ENCODE measurements at regions of chr9 and their contacts with region 1.

Region 1: DNA sequence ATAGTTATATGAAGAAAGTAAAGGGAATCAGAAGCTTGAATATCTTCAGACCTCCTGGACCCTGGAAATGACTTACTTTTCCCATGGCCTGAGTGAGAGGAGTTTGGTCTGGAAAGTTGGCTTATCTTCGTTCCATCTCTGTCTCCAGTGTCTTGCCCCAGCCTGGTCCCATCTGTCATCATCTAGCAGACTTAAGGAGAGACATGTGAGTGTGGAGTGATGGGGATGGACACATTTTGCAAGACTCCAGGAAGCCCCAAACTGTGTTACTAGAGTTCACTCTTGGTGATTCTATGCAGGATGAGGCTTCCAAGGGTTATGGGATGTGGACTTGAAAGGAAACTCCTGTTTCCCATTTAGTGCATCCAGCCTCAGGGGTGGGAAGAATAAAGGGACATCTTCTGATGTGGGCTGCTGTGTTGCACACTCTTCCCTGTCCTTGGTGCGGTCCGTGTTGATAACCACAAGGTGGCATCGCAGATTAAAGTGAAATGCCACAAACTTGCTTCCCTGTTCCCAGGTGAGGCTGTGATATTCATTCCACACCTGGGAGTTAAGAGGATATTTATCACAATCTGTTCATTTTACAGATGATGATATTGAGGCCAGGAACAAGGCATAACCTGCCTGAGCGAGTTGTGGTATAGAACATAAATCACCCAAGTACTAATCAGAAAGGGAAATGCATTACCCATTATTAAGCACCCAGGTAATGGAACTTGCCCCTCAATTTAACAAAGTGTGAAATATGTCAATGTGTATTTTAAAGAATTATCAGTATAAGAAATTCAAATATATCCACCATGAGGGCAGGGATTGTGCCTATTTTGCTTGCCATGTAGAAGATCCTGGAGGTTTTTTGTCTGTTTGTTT is 269.9 kb upstream of the PAPPA start:
- DNase-seq: no peak
- H3K4me3 ChIP-seq: no peak overlapping the region
- CTCF ChIP-seq: peak; percentile 67

Region 2: DNA sequence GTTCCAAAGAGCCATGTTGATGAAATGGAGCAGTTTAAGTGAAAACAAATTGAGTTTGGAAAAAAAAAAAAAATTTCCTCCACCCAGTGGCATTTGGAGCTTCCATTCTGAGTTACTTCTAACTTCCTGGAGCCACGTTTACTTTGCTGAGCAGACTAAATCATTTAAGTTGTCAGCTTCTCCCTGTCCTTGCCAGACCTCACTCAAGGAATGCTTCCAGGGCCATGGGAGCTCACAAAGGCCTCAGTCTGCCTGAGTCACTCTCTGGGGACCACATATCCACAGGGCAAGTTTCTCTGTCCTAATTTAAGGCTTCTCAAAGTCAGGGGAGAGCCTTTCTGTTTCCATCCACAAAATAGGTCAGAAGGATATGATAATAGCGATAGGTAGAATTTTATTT is 555.5 kb before region 1 on chr9:
- CTCF ChIA-PET with region 1: no interaction called
- POLR2A ChIA-PET with region 1: no interaction called
- DNase-seq: peak; percentile 83
- H3K4me3 ChIP-seq: no peak overlapping the region
- CTCF ChIP-seq: no peak

Region 3: GRCh38 chr9:116149844-116150243 is 266.2 kb after region 1 on chr9:
- CTCF ChIA-PET with region 1: interaction called, 26 read pairs
- POLR2A ChIA-PET with region 1: no interaction called
- DNase-seq: no peak
- H3K4me3 ChIP-seq: no peak overlapping the region
- CTCF ChIP-seq: peak; percentile 39

Measured in AG04449 (cell line).